Mammary epithelial cell (primary cell): ENCODE measurements at regions of chr19 and their contacts with region 1.

Region 1: GRCh38 chr19:51338563-51339312 is 3.2 kb downstream of the VSIG10L start:
- DNase-seq: peak; percentile 78
- H3K4me3 ChIP-seq: peak overlapping the region; percentile 59 to 68 (median 63)
- H3K27ac ChIP-seq: no peak overlapping the region
- H3K4me1 ChIP-seq: peaks cover 10% of the 10 kb centered on the region
- H3K27me3 ChIP-seq: no peaks in the 10 kb centered on the region
- CTCF ChIP-seq: peak; percentile 64 to 95

Region 2: GRCh38 chr19:51242881-51243630 is 95.7 kb before region 1 on chr19:
- CTCF ChIA-PET with region 1: no interaction called
- dilution Hi-C with region 1: loop called (anchors 5 kb)
- in situ Hi-C with region 1: no loop called
- intact Hi-C with region 1: no loop called
- DNase-seq: no peak
- H3K4me3 ChIP-seq: no peak overlapping the region
- H3K27ac ChIP-seq: no peak overlapping the region
- H3K4me1 ChIP-seq: no peaks in the 10 kb centered on the region
- H3K27me3 ChIP-seq: no peaks in the 10 kb centered on the region
- CTCF ChIP-seq: no peak

Region 3: GRCh38 chr19:51393959-51394836 is 55.5 kb after region 1 on chr19:
- CTCF ChIA-PET with region 1: interaction called, 3 read pairs
- dilution Hi-C with region 1: no loop called
- in situ Hi-C with region 1: no loop called
- intact Hi-C with region 1: loop called (anchors 1 kb)
- DNase-seq: peak; percentile 99
- H3K4me3 ChIP-seq: peak overlapping the region; percentile 53 to 59 (median 56)
- H3K27ac ChIP-seq: peak overlapping the region; percentile 55
- H3K4me1 ChIP-seq: peaks cover 9% of the 10 kb centered on the region
- H3K27me3 ChIP-seq: no peaks in the 10 kb centered on the region
- CTCF ChIP-seq: peak in 1 of 2 donors; percentile 9

Region 4: GRCh38 chr19:51422053-51422448 is 83.3 kb after region 1 on chr19:
- CTCF ChIA-PET with region 1: interaction called, 3 read pairs
- dilution Hi-C with region 1: no loop called
- in situ Hi-C with region 1: no loop called
- intact Hi-C with region 1: loop called (anchors 5 kb)
- DNase-seq: peak; percentile 63
- H3K4me3 ChIP-seq: no peak overlapping the region
- H3K27ac ChIP-seq: no peak overlapping the region
- H3K4me1 ChIP-seq: no peaks in the 10 kb centered on the region
- H3K27me3 ChIP-seq: peaks cover 2% of the 10 kb centered on the region
- CTCF ChIP-seq: peak; percentile 87 to 99

Region 5: GRCh38 chr19:51514866-51515481 is 176.2 kb after region 1 on chr19:
- CTCF ChIA-PET with region 1: no interaction called
- dilution Hi-C with region 1: no loop called
- in situ Hi-C with region 1: no loop called
- intact Hi-C with region 1: loop called (anchors 1 kb)
- DNase-seq: peak; percentile 39
- H3K4me3 ChIP-seq: no peak overlapping the region
- H3K27ac ChIP-seq: no peak overlapping the region
- H3K4me1 ChIP-seq: no peaks in the 10 kb centered on the region
- H3K27me3 ChIP-seq: no peaks in the 10 kb centered on the region
- CTCF ChIP-seq: peak; percentile 75 to 79